Naive thymus-derived CD4-positive, alpha-beta T cell (primary cell): ENCODE measurements at regions of chrX and their contacts with region 1.

Region 1: DNA sequence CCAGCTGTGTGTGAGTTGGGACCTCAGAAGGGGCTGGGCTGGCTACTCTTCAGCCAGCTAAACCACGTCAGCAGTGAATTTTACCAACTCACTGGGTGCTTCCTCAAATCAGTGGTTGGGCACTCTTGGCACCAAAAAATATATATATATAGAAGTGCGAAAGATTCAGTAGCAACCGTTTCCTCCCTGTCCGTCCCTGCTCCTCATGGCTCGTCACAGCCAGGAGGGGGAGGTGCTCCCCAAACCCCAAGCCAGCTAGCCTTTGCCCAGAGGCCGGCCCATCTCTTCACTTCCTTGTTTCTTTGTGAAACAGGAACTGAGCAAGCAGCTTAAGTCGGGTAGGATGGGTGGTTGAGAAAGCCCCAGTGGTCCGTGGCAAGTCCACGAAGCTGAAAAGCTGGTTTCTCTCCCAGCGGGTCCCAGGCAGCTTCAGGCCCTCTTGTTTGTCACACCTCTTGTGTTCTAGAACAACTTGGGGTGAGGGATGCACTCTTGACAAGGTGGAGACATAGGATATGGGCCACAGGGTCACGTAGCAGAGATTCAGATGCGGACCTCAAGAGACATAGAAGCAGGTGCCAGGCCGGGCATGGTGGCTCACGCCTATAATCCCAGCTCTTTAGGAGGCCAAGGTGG is 6.8 kb upstream of the SASH3 start:
- DNase-seq: no peak
- ATAC-seq: peak; percentile 69
- H3K4me3 ChIP-seq: no peak overlapping the region
- H3K4me3 Mint-ChIP-seq: peak overlapping the region; percentile 44 to 79 (median 66)
- H3K27ac ChIP-seq: peak overlapping the region; percentile 49
- H3K27ac Mint-ChIP-seq: peak overlapping the region; percentile 86 to 98 (median 92)
- H3K4me1 ChIP-seq: peaks cover 75% of the 10 kb centered on the region in 2 donors
- H3K4me1 Mint-ChIP-seq: peaks cover 14 to 94% (median 70%) of the 10 kb centered on the region in 7 donors
- H3K27me3 ChIP-seq: no peaks in the 10 kb centered on the region
- H3K27me3 Mint-ChIP-seq: no peaks in the 10 kb centered on the region

Region 2: GRCh38 chrX:129449148-129449547 is 323.8 kb before region 1 on chrX:
- CTCF ChIA-PET with region 1: no interaction called
- POLR2A ChIA-PET with region 1: no interaction called
- intact Hi-C with region 1: no loop called
- DNase-seq: no peak
- ATAC-seq: no peak
- H3K4me3 ChIP-seq: no peak overlapping the region
- H3K4me3 Mint-ChIP-seq: no peak overlapping the region
- H3K27ac ChIP-seq: no peak overlapping the region
- H3K27ac Mint-ChIP-seq: no peak overlapping the region
- H3K4me1 ChIP-seq: no peaks in the 10 kb centered on the region
- H3K4me1 Mint-ChIP-seq: no peaks in the 10 kb centered on the region
- H3K27me3 ChIP-seq: no peaks in the 10 kb centered on the region
- H3K27me3 Mint-ChIP-seq: no peaks in the 10 kb centered on the region

Region 3: DNA sequence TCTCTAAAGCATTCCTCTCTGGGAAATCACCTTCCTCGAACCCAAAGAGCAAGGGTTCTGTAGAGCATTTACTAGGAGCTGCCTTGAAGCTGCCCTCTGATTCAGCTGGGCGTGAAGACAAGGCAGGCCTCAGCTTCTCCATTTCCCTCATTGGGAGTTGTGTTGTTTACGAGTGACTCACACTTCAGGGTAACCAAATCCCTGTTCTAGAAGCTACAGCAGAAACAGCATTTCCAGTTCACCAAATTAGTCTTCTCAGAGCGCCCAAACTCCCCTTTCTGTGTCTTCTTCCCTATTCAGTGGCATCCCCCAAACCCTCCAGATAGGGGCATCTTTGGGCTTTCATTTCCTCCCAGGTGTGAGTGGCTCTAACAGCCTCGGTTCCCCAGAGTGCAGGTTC is 35.0 kb before region 1 on chrX:
- CTCF ChIA-PET with region 1: no interaction called
- POLR2A ChIA-PET with region 1: interaction called, 3 read pairs
- intact Hi-C with region 1: loop called in 1 of 2 experiments (anchors 2 kb)
- DNase-seq: no peak
- ATAC-seq: peak; percentile 63
- H3K4me3 ChIP-seq: no peak overlapping the region
- H3K4me3 Mint-ChIP-seq: peak overlapping the region in 1 of 10 donors; percentile 42
- H3K27ac ChIP-seq: no peak overlapping the region
- H3K27ac Mint-ChIP-seq: peak overlapping the region in 2 of 9 donors; percentile 53 to 72
- H3K4me1 ChIP-seq: peaks cover 8 to 17% of the 10 kb centered on the region in 2 donors
- H3K4me1 Mint-ChIP-seq: peaks cover 14 to 45% (median 29%) of the 10 kb centered on the region in 7 donors
- H3K27me3 ChIP-seq: no peaks in the 10 kb centered on the region
- H3K27me3 Mint-ChIP-seq: no peaks in the 10 kb centered on the region

Region 4: GRCh38 chrX:129754056-129755024 is 18.6 kb before region 1 on chrX:
- CTCF ChIA-PET with region 1: interaction called, 6 read pairs
- POLR2A ChIA-PET with region 1: interaction called, 167 read pairs
- intact Hi-C with region 1: loop called (anchors 1 kb)
- DNase-seq: no peak
- ATAC-seq: peak; percentile 44
- H3K4me3 ChIP-seq: no peak overlapping the region
- H3K4me3 Mint-ChIP-seq: peak overlapping the region in 9 of 10 donors; percentile 10 to 74 (median 47)
- H3K27ac ChIP-seq: no peak overlapping the region
- H3K27ac Mint-ChIP-seq: peak overlapping the region in 7 of 9 donors; percentile 45 to 71 (median 64)
- H3K4me1 ChIP-seq: peaks cover 37 to 44% of the 10 kb centered on the region in 2 donors
- H3K4me1 Mint-ChIP-seq: peaks cover 26 to 56% (median 53%) of the 10 kb centered on the region in 7 donors
- H3K27me3 ChIP-seq: no peaks in the 10 kb centered on the region
- H3K27me3 Mint-ChIP-seq: no peaks in the 10 kb centered on the region